WTC11 (cell line): ENCODE measurements at regions of chr5 and their contacts with region 1.

Region 1: GRCh38 chr5:175464074-175464941 is 14.1 kb upstream of the SFXN1 start:
- DNase-seq: peak; percentile 79
- ATAC-seq: peak; percentile 96
- H3K4me3 Mint-ChIP-seq: no peak overlapping the region
- H3K27ac Mint-ChIP-seq: no peak overlapping the region
- H3K4me1 Mint-ChIP-seq: peaks cover 5% of the 10 kb centered on the region
- H3K27me3 Mint-ChIP-seq: no peaks in the 10 kb centered on the region; the same call in 1 of the 2 replicates
- CTCF ChIP-seq: peak; percentile 61

Region 2: GRCh38 chr5:174910245-174910737 is 554.0 kb before region 1 on chr5:
- CTCF ChIA-PET with region 1: interaction called, 11 read pairs
- POLR2A ChIA-PET with region 1: no interaction called
- DNase-seq: peak; percentile 89
- ATAC-seq: peak; percentile 99
- H3K4me3 Mint-ChIP-seq: no peak overlapping the region
- H3K27ac Mint-ChIP-seq: no peak overlapping the region
- H3K4me1 Mint-ChIP-seq: peaks cover 8% of the 10 kb centered on the region
- H3K27me3 Mint-ChIP-seq: no peaks in the 10 kb centered on the region; the same call in 1 of the 2 replicates
- CTCF ChIP-seq: peak; percentile 96

Region 3: DNA sequence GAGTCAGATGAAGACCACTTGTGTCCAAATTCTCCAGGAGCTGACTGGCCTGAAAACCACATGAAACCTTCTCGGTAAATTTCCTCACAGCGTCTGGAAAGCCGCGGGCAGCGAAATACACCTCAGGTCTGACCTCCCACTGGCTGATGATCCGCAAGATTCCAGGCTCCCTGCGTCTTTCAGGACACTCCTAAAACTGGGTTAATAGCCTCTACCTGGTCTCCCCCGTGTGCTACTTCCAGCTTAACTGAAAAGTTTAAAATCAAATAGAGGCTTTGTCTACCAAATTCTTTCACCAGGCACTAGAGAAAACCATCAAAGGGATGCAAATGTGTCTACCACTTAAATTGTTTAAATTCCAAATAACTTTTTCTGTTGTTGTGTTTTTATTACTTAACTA is 332.9 kb before region 1 on chr5:
- CTCF ChIA-PET with region 1: interaction called, 11 read pairs
- POLR2A ChIA-PET with region 1: no interaction called
- DNase-seq: peak; percentile 29
- ATAC-seq: peak; percentile 81
- H3K4me3 Mint-ChIP-seq: peak overlapping the region; percentile 53
- H3K27ac Mint-ChIP-seq: peak overlapping the region; percentile 67
- H3K4me1 Mint-ChIP-seq: peaks cover 24% of the 10 kb centered on the region
- H3K27me3 Mint-ChIP-seq: no peaks in the 10 kb centered on the region; the same call in 1 of the 2 replicates
- CTCF ChIP-seq: no peak

Region 4: GRCh38 chr5:175335691-175336090 is 128.6 kb before region 1 on chr5:
- CTCF ChIA-PET with region 1: no interaction called
- POLR2A ChIA-PET with region 1: no interaction called
- DNase-seq: no peak
- ATAC-seq: no peak
- H3K4me3 Mint-ChIP-seq: no peak overlapping the region
- H3K27ac Mint-ChIP-seq: no peak overlapping the region
- H3K4me1 Mint-ChIP-seq: peaks cover 4% of the 10 kb centered on the region; the same call in 1 of the 2 replicates
- H3K27me3 Mint-ChIP-seq: no peaks in the 10 kb centered on the region; the same call in 1 of the 2 replicates
- CTCF ChIP-seq: no peak

Region 5: DNA sequence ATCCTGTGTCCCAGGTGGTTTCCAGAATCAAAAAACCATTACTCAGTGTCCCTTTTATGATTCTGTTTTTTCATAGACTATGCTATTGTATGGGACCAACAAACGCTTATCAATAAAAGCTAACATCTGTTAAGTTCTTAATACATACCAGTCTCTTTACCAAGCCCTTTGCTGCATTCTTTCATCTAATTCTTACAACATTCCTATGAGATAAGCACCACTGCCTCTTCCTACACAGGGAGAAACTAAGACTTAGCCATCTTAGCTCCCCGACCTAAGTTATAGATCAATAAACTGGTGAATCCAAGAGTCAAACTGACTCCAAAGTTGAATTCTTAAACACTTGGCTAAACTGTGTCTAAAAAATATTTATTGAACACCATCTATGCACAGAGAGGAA is 46.9 kb before region 1 on chr5:
- CTCF ChIA-PET with region 1: no interaction called
- POLR2A ChIA-PET with region 1: no interaction called
- DNase-seq: no peak
- ATAC-seq: no peak
- H3K4me3 Mint-ChIP-seq: no peak overlapping the region
- H3K27ac Mint-ChIP-seq: no peak overlapping the region
- H3K4me1 Mint-ChIP-seq: no peaks in the 10 kb centered on the region
- H3K27me3 Mint-ChIP-seq: 0 out of 2 replicates have a peak, but pooled peaks cover 4% of the 10 kb centered on the region
- CTCF ChIP-seq: no peak

Region 6: GRCh38 chr5:175444060-175444904 is 20.0 kb before region 1 on chr5 and contains the start of gene DRD1:
- CTCF ChIA-PET with region 1: interaction called, 10 read pairs
- POLR2A ChIA-PET with region 1: no interaction called
- DNase-seq: peak; percentile 79
- ATAC-seq: peak; percentile 84
- H3K4me3 Mint-ChIP-seq: peak within 1 kb of the TSS; percentile 71
- H3K27ac Mint-ChIP-seq: no peak within 1 kb of the TSS
- H3K4me1 Mint-ChIP-seq: peaks cover 33% of the 10 kb centered on the region
- H3K27me3 Mint-ChIP-seq: peaks cover 63% of the 10 kb centered on the region
- CTCF ChIP-seq: peak; percentile 87
- total RNA-seq, gene DRD1: 0.07 TPM in 2 of 3 replicates, not detected in the other

Region 7: DNA sequence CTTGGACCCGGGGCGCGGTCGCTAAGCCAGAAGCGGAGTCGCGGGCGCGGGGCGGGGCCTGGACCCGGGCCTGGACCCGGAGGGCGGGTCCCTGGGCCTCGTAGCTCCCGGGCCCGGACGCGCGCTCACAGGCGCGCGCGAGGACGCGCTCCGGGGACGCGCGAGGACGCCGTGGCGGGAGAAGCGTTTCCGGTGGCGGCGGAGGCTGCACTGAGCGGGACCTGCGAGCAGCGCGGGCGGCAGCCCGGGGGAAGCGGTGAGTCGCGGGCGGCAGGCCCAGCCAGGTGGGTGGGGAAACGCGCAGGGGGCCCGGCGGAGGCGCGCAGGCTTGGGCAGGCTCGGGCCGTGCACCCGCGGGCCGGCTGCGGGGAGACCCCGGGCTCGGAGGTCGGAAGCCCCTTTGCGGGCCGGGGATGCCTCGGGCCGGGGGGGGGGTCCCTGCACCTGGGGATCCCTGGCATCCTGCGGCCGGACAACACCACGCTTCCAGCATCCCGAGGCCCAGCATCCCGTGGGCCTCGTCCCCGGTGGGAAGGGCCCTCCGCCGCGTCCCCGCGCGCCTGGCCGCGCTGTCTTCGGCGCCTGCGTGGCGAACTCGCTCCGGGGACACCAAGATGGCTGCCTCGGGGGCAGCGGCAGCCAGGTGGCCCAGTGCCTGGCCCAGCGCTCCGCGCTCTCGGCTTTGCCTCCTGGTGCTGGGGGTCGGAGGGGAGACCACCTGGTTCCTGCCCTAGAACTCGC is 14.2 kb after region 1 on chr5 and contains the start of gene SFXN1:
- CTCF ChIA-PET with region 1: interaction called, 44 read pairs
- POLR2A ChIA-PET with region 1: interaction called, 3 read pairs
- DNase-seq: peak; percentile 81
- ATAC-seq: peak; percentile 90
- H3K4me3 Mint-ChIP-seq: peak within 1 kb of the TSS; percentile 92
- H3K27ac Mint-ChIP-seq: peak within 1 kb of the TSS; percentile 78
- H3K4me1 Mint-ChIP-seq: peaks cover 34% of the 10 kb centered on the region
- H3K27me3 Mint-ChIP-seq: peaks cover 32% of the 10 kb centered on the region
- CTCF ChIP-seq: no peak
- total RNA-seq, gene SFXN1: 82.9 to 96.1 TPM (median 85.6 TPM) in 3 replicates